ENCODE measurements at regions of chr2 and their contacts with region 1.

Region 1: GRCh38 chr2:38602732-38603401 is at the start of gene HNRNPLL:
- DNase-seq: no peak
- ATAC-seq: peak; percentile 86
- H3K4me3 ChIP-seq: peak within 1 kb of the TSS; percentile 74
- H3K27ac ChIP-seq: peak within 1 kb of the TSS; percentile 51
- H3K4me1 ChIP-seq: peaks cover 15% of the 10 kb centered on the region
- H3K27me3 ChIP-seq: no peaks in the 10 kb centered on the region; a peak in 2 of 4 replicates
- CTCF ChIP-seq: no peak
- EP300 ChIP-seq: no peak; a peak in 1 of 4 replicates
- POLR2A ChIP-seq: peak; percentile 73
- RAD21 ChIP-seq: no peak
- polyA plus RNA-seq, gene HNRNPLL: 0.98 to 1.5 TPM

Region 2: DNA sequence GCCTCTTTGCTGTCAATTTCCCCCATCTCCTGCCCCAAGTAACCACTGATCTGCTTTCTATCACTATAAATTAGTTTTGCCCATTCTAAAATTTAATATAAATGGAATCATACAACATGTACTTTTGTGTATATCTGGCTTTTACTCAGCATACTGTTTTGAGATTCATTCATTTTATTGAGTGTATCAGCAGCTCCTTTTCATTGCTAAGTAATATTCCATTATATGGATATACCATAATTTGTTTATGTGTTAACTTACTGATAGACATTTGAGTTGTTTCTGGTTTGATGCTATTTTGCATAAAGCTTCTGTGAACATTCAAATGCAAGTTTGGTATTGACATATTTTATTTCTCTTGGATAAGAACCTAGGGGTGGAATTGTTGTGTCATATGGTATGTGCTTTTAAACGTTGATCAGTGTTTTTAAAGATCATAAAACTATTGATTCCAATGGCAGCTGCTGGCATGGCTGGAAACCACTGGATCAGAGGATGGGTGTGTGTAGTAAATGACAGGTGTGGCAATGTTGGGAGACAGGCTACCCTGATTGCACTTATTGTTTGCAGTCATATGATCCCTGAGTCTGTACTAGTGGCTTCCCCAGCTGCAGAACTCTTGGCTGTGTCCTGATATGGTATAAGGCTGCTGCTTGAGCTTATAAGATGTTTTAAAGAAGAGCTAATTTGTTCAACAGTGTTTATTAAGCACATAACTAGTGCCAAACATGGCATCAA is 602.2 kb before region 1 on chr2:
- CTCF ChIA-PET with region 1: no interaction called
- POLR2A ChIA-PET with region 1: no interaction called
- RAD21 ChIA-PET with region 1: no interaction called
- SMC1A ChIA-PET with region 1: no interaction called
- in situ Hi-C with region 1: no loop called
- intact Hi-C with region 1: no loop called
- DNase-seq: no peak
- ATAC-seq: no peak
- H3K4me3 ChIP-seq: no peak overlapping the region
- H3K27ac ChIP-seq: no peak overlapping the region
- H3K4me1 ChIP-seq: no peaks in the 10 kb centered on the region
- H3K27me3 ChIP-seq: no peaks in the 10 kb centered on the region
- CTCF ChIP-seq: no peak
- EP300 ChIP-seq: no peak
- POLR2A ChIP-seq: no peak
- RAD21 ChIP-seq: no peak

Region 3: GRCh38 chr2:38417745-38418689 is 184.8 kb before region 1 on chr2:
- CTCF ChIA-PET with region 1: no interaction called
- POLR2A ChIA-PET with region 1: no interaction called
- RAD21 ChIA-PET with region 1: no interaction called
- SMC1A ChIA-PET with region 1: no interaction called
- in situ Hi-C with region 1: no loop called
- intact Hi-C with region 1: no loop called
- DNase-seq: no peak
- ATAC-seq: no peak
- H3K4me3 ChIP-seq: no peak overlapping the region
- H3K27ac ChIP-seq: no peak overlapping the region
- H3K4me1 ChIP-seq: peaks cover 16% of the 10 kb centered on the region
- H3K27me3 ChIP-seq: no peaks in the 10 kb centered on the region
- CTCF ChIP-seq: no peak
- EP300 ChIP-seq: no peak
- POLR2A ChIP-seq: no peak
- RAD21 ChIP-seq: no peak

Region 4: DNA sequence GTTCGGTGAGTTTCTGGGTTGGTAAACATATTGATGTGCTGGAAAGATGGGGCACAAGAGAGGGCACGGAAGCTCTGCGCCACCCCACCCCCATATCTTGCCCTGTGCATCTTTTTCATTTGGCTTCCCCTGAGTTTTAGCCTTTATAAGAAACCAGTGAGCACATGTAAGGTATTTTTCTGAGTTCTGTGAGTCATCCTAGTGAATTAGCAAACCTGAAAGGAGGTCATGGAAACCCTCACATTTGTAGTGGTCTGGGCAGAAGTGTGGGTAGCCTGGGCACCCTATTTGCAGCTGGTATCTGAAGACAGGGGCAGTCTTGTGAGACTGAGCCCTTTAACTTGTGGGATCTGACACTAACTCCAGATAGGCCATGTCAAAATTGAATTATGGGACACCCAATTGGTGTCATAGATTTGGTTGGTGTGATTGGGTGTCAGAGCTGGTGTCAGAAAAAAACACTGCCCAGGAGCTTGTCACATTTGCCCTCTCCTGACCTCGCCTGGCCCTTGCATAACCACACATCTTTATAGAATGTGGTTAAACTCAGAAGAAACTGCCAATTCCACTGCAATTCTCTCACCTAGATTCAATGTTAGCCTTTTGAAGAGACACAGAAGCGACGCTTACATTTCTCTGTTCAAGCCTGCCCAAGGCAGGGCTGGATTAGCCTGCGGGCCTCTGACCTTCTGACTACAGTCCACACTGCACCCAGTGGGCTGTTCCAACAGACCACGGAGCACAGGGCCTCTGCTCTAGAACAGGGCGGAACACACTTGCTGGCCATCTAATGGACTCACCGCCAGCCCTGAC is 51.1 kb after region 1 on chr2:
- CTCF ChIA-PET with region 1: interaction called, 5 read pairs
- POLR2A ChIA-PET with region 1: interaction called, 8 read pairs
- RAD21 ChIA-PET with region 1: interaction called, 14 read pairs
- SMC1A ChIA-PET with region 1: interaction called, 17 read pairs
- in situ Hi-C with region 1: no loop called
- intact Hi-C with region 1: loop called (anchors 5 kb)
- DNase-seq: peak; percentile 48
- ATAC-seq: peak; percentile 86
- H3K4me3 ChIP-seq: no peak overlapping the region
- H3K27ac ChIP-seq: no peak overlapping the region
- H3K4me1 ChIP-seq: peaks cover 23% of the 10 kb centered on the region
- H3K27me3 ChIP-seq: no peaks in the 10 kb centered on the region
- CTCF ChIP-seq: no peak
- EP300 ChIP-seq: no peak
- POLR2A ChIP-seq: no peak
- RAD21 ChIP-seq: no peak

Region 5: DNA sequence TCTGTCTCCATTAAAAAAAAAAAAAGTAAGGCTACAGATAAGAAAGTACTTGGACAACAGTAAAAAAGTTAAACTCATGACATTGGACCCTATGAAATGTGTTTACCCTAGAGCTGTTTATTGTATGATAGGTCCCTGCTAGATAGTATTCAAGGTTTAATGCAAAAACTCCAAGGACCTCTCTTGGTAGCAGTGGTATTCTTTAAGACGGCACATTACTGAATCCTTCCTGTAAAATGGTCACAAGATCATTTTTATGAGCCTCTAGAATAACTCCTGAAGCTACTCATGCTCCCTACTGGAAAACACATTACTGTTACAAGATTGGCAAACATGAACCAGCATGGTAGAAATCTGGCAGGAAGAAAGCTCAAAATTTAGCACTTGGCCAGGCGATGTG is 101.8 kb after region 1 on chr2:
- CTCF ChIA-PET with region 1: interaction called, 13 read pairs
- POLR2A ChIA-PET with region 1: no interaction called
- RAD21 ChIA-PET with region 1: interaction called, 4 read pairs
- SMC1A ChIA-PET with region 1: interaction called, 13 read pairs
- in situ Hi-C with region 1: no loop called
- intact Hi-C with region 1: no loop called
- DNase-seq: no peak
- ATAC-seq: no peak
- H3K4me3 ChIP-seq: no peak overlapping the region
- H3K27ac ChIP-seq: no peak overlapping the region
- H3K4me1 ChIP-seq: peaks cover 9% of the 10 kb centered on the region
- H3K27me3 ChIP-seq: no peaks in the 10 kb centered on the region
- CTCF ChIP-seq: no peak
- EP300 ChIP-seq: no peak
- POLR2A ChIP-seq: no peak
- RAD21 ChIP-seq: no peak

Region 6: GRCh38 chr2:38720613-38721241 is 117.9 kb after region 1 on chr2:
- CTCF ChIA-PET with region 1: interaction called, 177 read pairs
- POLR2A ChIA-PET with region 1: interaction called, 18 read pairs
- RAD21 ChIA-PET with region 1: interaction called, 140 read pairs
- SMC1A ChIA-PET with region 1: interaction called, 108 read pairs
- in situ Hi-C with region 1: loop called (anchors 5 kb)
- intact Hi-C with region 1: loop called (anchors 1 kb)
- DNase-seq: peak; percentile 40
- ATAC-seq: peak; percentile 56
- H3K4me3 ChIP-seq: no peak overlapping the region
- H3K27ac ChIP-seq: no peak overlapping the region
- H3K4me1 ChIP-seq: peaks cover 33% of the 10 kb centered on the region
- H3K27me3 ChIP-seq: no peaks in the 10 kb centered on the region
- CTCF ChIP-seq: no peak
- EP300 ChIP-seq: no peak; a peak in 1 of 4 replicates
- POLR2A ChIP-seq: no peak
- RAD21 ChIP-seq: no peak

Region 7: GRCh38 chr2:38750891-38751595 is 148.2 kb after region 1 on chr2 and contains the start of gene SRSF7:
- CTCF ChIA-PET with region 1: interaction called, 3 read pairs
- POLR2A ChIA-PET with region 1: interaction called, 12 read pairs
- RAD21 ChIA-PET with region 1: interaction called, 4 read pairs
- SMC1A ChIA-PET with region 1: interaction called, 8 read pairs
- in situ Hi-C with region 1: no loop called
- intact Hi-C with region 1: no loop called
- DNase-seq: peak; percentile 93
- ATAC-seq: peak; percentile 84
- H3K4me3 ChIP-seq: peak within 1 kb of the TSS; percentile 95
- H3K27ac ChIP-seq: peak within 1 kb of the TSS; percentile 97
- H3K4me1 ChIP-seq: no peaks in the 10 kb centered on the region; the same call in 1 of the 2 replicates
- H3K27me3 ChIP-seq: no peaks in the 10 kb centered on the region
- CTCF ChIP-seq: no peak
- EP300 ChIP-seq: peak in 1 of 2 experiments; percentile 76; a peak in 2 of 4 replicates
- POLR2A ChIP-seq: peak; percentile 100
- RAD21 ChIP-seq: no peak
- polyA plus RNA-seq, gene SRSF7: 753 to 785 TPM

Region 8: GRCh38 chr2:39050109-39050508 is 447.2 kb after region 1 on chr2:
- CTCF ChIA-PET with region 1: no interaction called
- POLR2A ChIA-PET with region 1: no interaction called
- RAD21 ChIA-PET with region 1: no interaction called
- SMC1A ChIA-PET with region 1: no interaction called
- in situ Hi-C with region 1: no loop called
- intact Hi-C with region 1: no loop called
- DNase-seq: no peak
- ATAC-seq: no peak
- H3K4me3 ChIP-seq: no peak overlapping the region
- H3K27ac ChIP-seq: no peak overlapping the region
- H3K4me1 ChIP-seq: no peaks in the 10 kb centered on the region
- H3K27me3 ChIP-seq: no peaks in the 10 kb centered on the region
- CTCF ChIP-seq: no peak
- EP300 ChIP-seq: no peak
- POLR2A ChIP-seq: no peak
- RAD21 ChIP-seq: no peak